ENCODE measurements at regions of chr2 and their contacts with region 1.

Region 1: DNA sequence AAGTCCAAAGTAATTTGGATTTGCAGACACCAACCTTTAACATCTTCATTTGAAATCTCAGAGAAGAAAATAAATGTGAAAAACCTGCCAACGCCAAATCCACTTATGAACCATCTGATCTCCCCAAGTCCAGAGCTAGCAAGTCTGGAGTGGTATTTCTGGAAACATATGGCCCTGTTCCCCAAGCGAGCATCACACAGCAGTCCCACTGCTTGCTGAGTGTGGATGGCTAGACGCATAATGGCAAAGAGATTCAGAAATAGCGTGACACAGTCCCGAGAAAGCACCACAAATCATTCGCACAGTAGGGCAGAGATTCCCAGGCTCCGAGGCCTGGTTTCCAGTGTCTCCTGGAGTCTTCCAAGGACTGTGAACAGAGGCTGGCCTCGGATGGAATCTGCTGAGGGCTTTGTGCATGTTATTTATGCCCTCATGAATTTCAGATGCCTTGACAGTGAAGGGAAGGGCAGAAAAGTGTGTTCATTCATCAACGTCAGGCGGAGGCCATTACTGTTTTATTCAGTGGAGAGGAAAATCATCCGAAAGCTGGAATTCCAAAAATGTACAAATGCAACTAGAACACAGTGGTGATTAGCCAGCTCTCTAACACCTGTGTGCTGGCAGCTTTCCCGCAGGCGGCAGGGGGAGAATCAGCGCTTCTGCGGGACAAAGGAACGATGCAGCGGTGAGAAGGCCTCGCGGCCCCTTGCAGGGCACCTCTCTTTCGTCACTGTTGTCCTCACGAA is 417.0 kb downstream of the EIPR1 start:
- DNase-seq: no peak
- H3K4me3 Mint-ChIP-seq: no peak overlapping the region
- H3K27ac Mint-ChIP-seq: no peak overlapping the region
- H3K4me1 Mint-ChIP-seq: no peaks in the 10 kb centered on the region
- H3K27me3 Mint-ChIP-seq: no peaks in the 10 kb centered on the region
- CTCF ChIP-seq: no peak

Region 2: GRCh38 chr2:2096803-2097464 is 863.7 kb before region 1 on chr2:
- CTCF ChIA-PET with region 1: interaction called, 10 read pairs
- intact Hi-C with region 1: no loop called
- DNase-seq: no peak
- H3K4me3 Mint-ChIP-seq: no peak overlapping the region
- H3K27ac Mint-ChIP-seq: no peak overlapping the region
- H3K4me1 Mint-ChIP-seq: no peaks in the 10 kb centered on the region
- H3K27me3 Mint-ChIP-seq: no peaks in the 10 kb centered on the region
- CTCF ChIP-seq: no peak

Region 3: DNA sequence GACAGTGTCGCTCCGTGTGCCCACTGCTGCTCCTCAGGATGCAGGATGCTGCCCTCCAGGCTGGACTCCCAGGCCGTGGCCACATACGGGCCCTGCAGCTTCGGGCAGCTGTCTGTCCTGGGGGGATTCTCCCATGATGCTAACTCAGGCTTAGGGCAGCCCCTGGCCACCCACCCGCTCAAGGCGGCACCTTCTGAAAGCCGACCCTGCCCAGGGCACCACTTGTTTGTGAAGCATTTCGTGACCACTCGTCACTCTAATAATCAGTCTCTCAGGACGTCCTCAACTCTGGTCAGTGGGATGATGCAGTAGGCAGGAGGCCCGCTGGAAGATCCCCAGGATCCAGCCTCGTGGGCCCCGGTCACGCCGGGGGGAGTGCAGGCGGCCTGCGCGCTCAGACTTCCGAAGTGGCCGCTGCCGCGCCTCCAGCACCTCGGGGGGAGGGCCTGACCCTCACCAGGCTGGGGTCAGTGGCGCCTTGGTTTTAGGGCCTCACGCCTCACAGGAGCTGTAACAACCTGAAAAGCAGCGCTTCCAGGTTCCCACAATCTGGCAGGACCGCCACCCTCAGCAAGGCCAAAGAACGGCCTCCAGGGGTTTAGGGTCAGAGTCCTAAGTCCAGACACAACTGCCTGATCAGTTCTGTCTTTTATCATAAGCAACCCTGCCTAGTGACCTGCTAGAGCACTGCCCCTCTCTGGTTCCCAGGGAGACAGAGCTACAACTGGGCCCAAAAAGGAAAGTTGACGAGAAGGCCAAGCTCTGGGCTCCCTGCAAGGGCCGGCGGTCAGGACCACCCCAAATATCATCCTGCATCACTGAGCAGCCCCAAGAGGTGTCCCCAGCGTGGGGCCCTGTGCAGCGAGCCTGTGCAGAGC is 364.0 kb after region 1 on chr2:
- CTCF ChIA-PET with region 1: no interaction called
- intact Hi-C with region 1: no loop called
- DNase-seq: no peak
- H3K4me3 Mint-ChIP-seq: no peak overlapping the region
- H3K27ac Mint-ChIP-seq: no peak overlapping the region
- H3K4me1 Mint-ChIP-seq: no peaks in the 10 kb centered on the region
- H3K27me3 Mint-ChIP-seq: no peaks in the 10 kb centered on the region
- CTCF ChIP-seq: no peak

Measured in Calu3 (cell line).